ENCODE measurements at regions of chr1 and their contacts with region 1.

Region 1: GRCh38 chr1:11805447-11806306 is at the starts of genes CLCN6 and MTHFR:
- DNase-seq: peak; percentile 92 to 100
- H3K4me3 ChIP-seq: peak within 1 kb of the TSS; percentile 87
- H3K27ac ChIP-seq: peak within 1 kb of the TSS; percentile 82
- H3K4me1 ChIP-seq: peaks cover 27% of the 10 kb centered on the region; the same call in 1 of the 2 replicates
- H3K27me3 ChIP-seq: no peaks in the 10 kb centered on the region
- CTCF ChIP-seq: no peak
- total RNA-seq, gene CLCN6: 14.8 and 16.7 TPM in 2 replicates
- total RNA-seq, gene MTHFR: 15.8 and 22.2 TPM in 2 replicates

Region 2: DNA sequence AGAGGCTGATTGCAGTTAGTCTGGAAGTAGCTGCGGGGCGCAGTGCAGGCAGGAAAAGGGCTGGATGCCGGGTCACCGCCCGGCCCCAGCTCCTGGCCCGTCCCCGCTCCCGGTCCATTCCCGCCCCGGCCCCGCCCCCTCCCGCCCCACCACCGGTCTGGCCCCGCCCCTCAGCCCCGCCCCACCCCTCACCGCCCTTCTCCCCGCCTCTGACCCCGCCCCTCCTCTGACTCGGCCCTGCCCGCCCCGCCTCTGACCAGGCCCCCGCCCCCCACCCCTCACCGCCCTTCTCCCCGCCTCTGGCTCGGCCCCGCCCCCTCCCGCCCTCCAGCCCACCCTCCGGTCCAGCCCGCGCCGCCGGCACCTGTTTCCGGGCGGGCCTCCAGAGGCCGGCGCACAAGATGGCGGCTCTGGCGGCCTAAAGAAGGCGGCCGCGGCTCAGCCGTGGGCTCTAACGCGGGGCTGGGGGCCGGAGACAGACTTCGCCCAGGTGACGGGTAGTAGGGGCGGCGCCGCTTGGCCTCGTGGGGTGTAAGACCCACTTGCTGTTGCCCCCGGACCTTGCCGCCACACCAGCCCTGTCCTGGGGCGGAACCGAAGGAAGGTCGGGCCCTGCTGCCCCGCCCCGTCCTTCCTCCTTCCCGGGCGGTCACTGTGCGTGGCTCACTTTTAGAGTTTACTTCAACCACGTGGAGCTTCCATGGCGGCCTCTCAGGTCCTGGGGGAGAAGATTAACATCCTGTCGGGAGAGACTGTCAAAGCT is 532.7 kb before region 1 on chr1 and contains the start of gene UBIAD1:
- CTCF ChIA-PET with region 1: no interaction called
- POLR2A ChIA-PET with region 1: no interaction called
- intact Hi-C with region 1: loop called (anchors 5 kb)
- DNase-seq: peak; percentile 55 to 75
- H3K4me3 ChIP-seq: peak within 1 kb of the TSS; percentile 81
- H3K27ac ChIP-seq: peak within 1 kb of the TSS; percentile 73
- H3K4me1 ChIP-seq: 0 out of 2 replicates have a peak, but pooled peaks cover 4% of the 10 kb centered on the region
- H3K27me3 ChIP-seq: no peaks in the 10 kb centered on the region
- CTCF ChIP-seq: no peak
- total RNA-seq, gene UBIAD1: 11.2 and 12.1 TPM in 2 replicates

Region 3: GRCh38 chr1:11661103-11661502 is 144.6 kb before region 1 on chr1:
- CTCF ChIA-PET with region 1: no interaction called
- POLR2A ChIA-PET with region 1: no interaction called
- intact Hi-C with region 1: loop called (anchors 5 kb)
- DNase-seq: no peak
- H3K4me3 ChIP-seq: no peak overlapping the region
- H3K27ac ChIP-seq: no peak overlapping the region
- H3K4me1 ChIP-seq: no peaks in the 10 kb centered on the region
- H3K27me3 ChIP-seq: no peaks in the 10 kb centered on the region
- CTCF ChIP-seq: no peak

Region 4: GRCh38 chr1:11735854-11736745 is 69.6 kb before region 1 on chr1 and contains the start of gene AGTRAP:
- CTCF ChIA-PET with region 1: no interaction called
- POLR2A ChIA-PET with region 1: no interaction called
- intact Hi-C with region 1: loop called (anchors 5 kb)
- DNase-seq: peak; percentile 78 to 91
- H3K4me3 ChIP-seq: peak within 1 kb of the TSS; percentile 79
- H3K27ac ChIP-seq: peak within 1 kb of the TSS; percentile 96
- H3K4me1 ChIP-seq: peaks cover 9% of the 10 kb centered on the region
- H3K27me3 ChIP-seq: no peaks in the 10 kb centered on the region
- CTCF ChIP-seq: no peak
- total RNA-seq, gene AGTRAP: 75.5 and 77.7 TPM in 2 replicates

Region 5: GRCh38 chr1:11784993-11785769 is 20.5 kb before region 1 on chr1:
- CTCF ChIA-PET with region 1: interaction called, 7 read pairs
- POLR2A ChIA-PET with region 1: interaction called, 14 read pairs
- intact Hi-C with region 1: loop called (anchors 1 kb)
- DNase-seq: peak; percentile 47 to 77
- H3K4me3 ChIP-seq: no peak overlapping the region
- H3K27ac ChIP-seq: no peak overlapping the region
- H3K4me1 ChIP-seq: no peaks in the 10 kb centered on the region; the same call in 1 of the 2 replicates
- H3K27me3 ChIP-seq: no peaks in the 10 kb centered on the region
- CTCF ChIP-seq: peak; percentile 76

Region 6: GRCh38 chr1:11790880-11791715 is 14.6 kb before region 1 on chr1:
- CTCF ChIA-PET with region 1: no interaction called
- POLR2A ChIA-PET with region 1: interaction called, 5 read pairs
- intact Hi-C with region 1: loop called (anchors 1 kb)
- DNase-seq: peak in 1 of 2 experiments; percentile 70
- H3K4me3 ChIP-seq: no peak overlapping the region
- H3K27ac ChIP-seq: no peak overlapping the region
- H3K4me1 ChIP-seq: peaks cover 4% of the 10 kb centered on the region
- H3K27me3 ChIP-seq: no peaks in the 10 kb centered on the region
- CTCF ChIP-seq: no peak